PC-9 (cell line): ENCODE measurements at regions of chr1 and their contacts with region 1.

Region 1: DNA sequence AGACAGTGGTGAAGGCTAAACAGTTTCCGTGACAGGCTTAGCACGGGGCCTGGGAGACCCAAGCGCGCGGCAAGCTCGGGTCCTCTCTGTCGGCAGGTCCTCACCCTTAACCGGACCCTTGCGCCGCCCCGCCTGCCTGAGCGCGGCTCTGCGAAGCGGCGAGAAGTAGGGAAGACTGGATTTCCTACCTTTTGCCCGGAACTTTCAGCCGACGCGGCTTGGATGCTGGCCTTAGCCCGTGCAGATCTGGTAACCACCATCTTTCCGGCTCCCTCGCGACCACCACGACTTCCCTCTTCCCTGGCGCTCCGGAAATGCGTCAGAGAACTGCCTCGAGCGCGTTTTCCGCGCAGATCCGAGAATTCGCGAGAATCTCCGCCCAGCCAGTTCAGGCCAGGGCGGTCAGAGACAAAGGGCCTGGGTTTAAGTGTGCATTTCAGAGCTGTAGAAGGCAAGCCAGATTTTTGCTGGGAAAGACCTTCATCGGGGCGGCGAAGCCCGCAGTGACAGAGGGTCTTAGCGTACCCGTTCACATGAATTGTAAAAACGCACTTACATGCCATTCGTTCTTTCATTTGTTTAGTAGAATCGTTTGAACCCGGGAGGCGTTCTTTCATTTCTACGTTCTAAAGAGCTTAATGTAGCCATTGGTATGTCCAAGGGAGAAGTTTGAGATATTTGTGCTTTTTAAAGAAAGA is at the start of gene DNTTIP2:
- DNase-seq: peak; percentile 88 to 89
- H3K4me3 ChIP-seq: peak within 1 kb of the TSS; percentile 85
- H3K27ac ChIP-seq: peak within 1 kb of the TSS; percentile 95
- H3K4me1 ChIP-seq: peaks cover 29% of the 10 kb centered on the region
- H3K27me3 ChIP-seq: no peaks in the 10 kb centered on the region
- CTCF ChIP-seq: no peak
- total RNA-seq, gene DNTTIP2: 85.7 and 93.4 TPM in 2 replicates

Region 2: DNA sequence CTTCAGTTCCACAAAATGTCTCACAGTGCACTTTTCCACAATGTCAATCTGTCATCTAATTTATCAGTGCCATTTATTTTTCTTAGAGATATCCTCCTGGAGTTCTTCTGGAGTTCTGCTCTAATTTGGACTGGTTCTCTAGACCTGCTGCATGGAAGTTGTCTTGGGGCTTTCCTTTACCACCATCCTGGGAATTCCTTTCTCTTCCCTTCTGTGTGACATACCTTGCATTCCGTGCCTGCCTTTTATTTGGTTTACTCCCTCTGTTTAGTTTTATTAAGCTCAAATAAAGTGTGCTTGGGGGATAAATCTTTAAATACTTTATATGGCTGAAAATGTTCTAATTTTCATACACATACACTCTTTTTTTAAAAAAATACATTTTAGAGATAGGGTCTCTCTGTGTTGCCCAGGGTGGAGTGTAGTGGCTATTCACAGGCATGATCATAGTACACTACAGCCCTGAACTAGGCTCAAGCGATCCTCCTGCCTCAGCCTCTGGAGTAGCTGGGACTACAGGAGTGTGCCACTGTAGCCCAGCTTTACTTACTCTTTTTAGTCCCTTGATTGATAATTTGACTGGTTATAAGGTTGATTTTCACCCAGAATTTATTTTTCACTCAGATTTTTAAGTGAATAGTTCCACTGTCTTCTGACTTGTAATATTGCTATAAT is 785.6 kb before region 1 on chr1:
- CTCF ChIA-PET with region 1: interaction called, 19 read pairs
- POLR2A ChIA-PET with region 1: no interaction called
- intact Hi-C with region 1: no loop called
- DNase-seq: no peak
- H3K4me3 ChIP-seq: no peak overlapping the region
- H3K27ac ChIP-seq: peak overlapping the region; percentile 11
- H3K4me1 ChIP-seq: no peaks in the 10 kb centered on the region
- H3K27me3 ChIP-seq: no peaks in the 10 kb centered on the region
- CTCF ChIP-seq: no peak

Region 3: GRCh38 chr1:94045465-94046056 is 166.5 kb after region 1 on chr1:
- CTCF ChIA-PET with region 1: no interaction called
- POLR2A ChIA-PET with region 1: no interaction called
- intact Hi-C with region 1: no loop called
- DNase-seq: peak; percentile 92 to 97
- H3K4me3 ChIP-seq: no peak overlapping the region
- H3K27ac ChIP-seq: peak overlapping the region; percentile 28
- H3K4me1 ChIP-seq: peaks cover 30% of the 10 kb centered on the region
- H3K27me3 ChIP-seq: no peaks in the 10 kb centered on the region
- CTCF ChIP-seq: peak; percentile 90